IMR-90 (cell line): ENCODE measurements at regions of chr6 and their contacts with region 1.

Region 1: DNA sequence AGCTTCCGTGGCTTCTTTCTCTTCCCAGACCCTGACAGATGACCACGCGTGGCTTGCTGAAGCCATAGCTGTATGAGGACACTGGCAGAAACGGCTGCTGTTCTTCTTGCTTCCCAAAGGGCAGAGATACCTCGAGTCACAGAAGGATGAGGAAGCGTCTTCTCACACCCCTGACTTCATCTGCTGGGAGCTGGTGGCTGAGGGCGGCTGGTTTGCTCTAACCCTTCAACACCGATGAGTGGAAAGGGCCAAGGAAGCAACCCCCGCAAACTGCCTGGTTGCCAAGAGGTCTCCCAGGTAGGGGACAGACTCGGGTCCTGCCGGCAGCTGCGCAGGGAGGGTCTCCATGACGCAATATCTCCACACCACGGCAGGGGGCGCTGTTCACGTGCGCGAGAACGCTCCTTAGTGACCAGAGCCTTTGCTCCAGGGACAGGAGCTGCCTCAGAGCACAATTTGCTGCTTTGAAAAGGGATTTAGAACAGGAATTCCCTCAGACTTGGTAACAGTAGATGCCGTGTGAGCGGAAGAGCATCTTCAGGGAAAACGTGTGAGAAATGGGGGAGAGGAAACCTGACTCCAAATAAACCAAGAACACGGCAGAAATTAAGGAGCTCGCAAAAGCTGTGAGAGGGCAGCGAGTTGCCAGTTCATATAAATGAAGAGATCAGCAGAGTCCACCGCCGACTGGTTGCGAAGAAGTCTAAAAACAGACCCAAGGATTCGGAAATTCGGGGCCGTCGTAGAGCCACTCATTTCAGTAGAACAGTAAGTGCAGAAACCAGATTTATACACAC is 80.2 kb downstream of the ERMARD start:
- DNase-seq: peak; percentile 36
- ATAC-seq: peak; percentile 97
- H3K4me3 ChIP-seq: no peak overlapping the region
- H3K27ac ChIP-seq: no peak overlapping the region
- H3K4me1 ChIP-seq: no peaks in the 10 kb centered on the region
- H3K27me3 ChIP-seq: peaks cover 4% of the 10 kb centered on the region
- CTCF ChIP-seq: peak; percentile 73
- POLR2A ChIP-seq: no peak
- RAD21 ChIP-seq: peak; percentile 80

Region 2: DNA sequence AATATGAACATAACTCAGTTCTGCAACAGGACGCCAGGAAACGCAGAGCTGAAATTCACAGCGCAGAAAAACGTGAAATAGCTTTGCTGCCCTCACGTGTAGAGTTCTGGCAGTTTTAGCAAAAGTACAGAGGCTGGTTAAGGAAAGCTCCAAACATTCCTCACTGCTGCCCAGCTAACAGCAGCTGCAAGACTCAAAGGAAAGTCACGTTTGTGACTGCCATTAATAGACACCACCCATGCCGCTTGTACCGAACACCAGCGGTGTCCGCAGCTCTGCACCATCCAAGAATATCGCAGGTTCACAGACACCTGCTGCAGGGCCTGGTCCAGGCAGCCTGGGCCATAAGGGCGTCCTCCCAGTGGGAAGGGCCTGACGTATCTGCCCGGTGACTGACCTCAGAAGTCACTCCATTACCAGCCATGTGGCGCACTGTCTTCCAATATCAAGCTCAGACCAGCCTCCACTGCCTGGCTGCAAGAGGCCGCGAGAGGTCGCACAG is 191.2 kb before region 1 on chr6:
- CTCF ChIA-PET with region 1: no interaction called
- POLR2A ChIA-PET with region 1: no interaction called
- dilution Hi-C with region 1: no loop called
- in situ Hi-C with region 1: no loop called
- intact Hi-C with region 1: no loop called
- DNase-seq: peak; percentile 17
- ATAC-seq: no peak
- H3K4me3 ChIP-seq: no peak overlapping the region
- H3K27ac ChIP-seq: no peak overlapping the region
- H3K4me1 ChIP-seq: no peaks in the 10 kb centered on the region
- H3K27me3 ChIP-seq: no peaks in the 10 kb centered on the region
- CTCF ChIP-seq: peak; percentile 27
- POLR2A ChIP-seq: no peak
- RAD21 ChIP-seq: peak; percentile 42

Region 3: DNA sequence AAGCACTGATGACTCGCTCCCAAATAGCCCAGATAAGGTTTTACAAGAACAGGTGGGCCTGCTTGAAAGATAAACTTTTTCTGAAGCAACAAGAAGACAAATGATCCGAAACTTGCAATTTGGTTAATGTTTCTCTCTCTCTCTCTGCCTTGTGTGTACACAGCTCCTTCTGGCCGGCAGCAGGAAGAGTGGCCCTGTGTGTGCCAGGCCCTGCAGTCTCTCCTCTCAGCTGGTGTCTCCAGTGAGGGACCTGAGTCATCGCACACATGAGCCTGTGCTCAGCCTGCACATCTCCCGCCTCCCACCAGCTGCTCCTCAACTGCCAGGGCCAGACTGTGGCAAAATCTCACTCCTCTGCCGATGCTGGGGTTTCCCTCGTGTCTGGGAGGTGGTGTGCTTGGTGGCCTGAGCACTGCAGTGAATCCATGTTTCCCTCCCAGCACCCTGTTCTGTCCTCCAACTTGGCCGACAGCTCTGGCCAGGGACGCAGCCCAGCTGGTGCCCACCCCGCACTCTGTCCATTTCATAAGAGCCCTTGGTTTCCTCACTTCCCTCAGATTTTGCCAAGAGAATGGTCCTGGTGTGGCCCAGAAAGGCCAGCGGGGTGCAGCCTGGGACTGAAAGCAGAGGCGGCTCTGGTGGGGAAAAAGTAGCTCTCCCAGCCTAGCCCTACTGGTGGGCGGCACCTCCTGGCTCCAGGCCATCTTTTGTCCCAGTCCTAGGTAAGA is 30.8 kb before region 1 on chr6:
- CTCF ChIA-PET with region 1: interaction called, 13 read pairs
- POLR2A ChIA-PET with region 1: no interaction called
- dilution Hi-C with region 1: no loop called
- in situ Hi-C with region 1: no loop called
- intact Hi-C with region 1: no loop called
- DNase-seq: peak; percentile 82
- ATAC-seq: peak; percentile 91
- H3K4me3 ChIP-seq: no peak overlapping the region
- H3K27ac ChIP-seq: peak overlapping the region; percentile 4; the same call in 1 of the 2 replicates
- H3K4me1 ChIP-seq: peaks cover 10% of the 10 kb centered on the region; the same call in 1 of the 2 replicates
- H3K27me3 ChIP-seq: peaks cover 18% of the 10 kb centered on the region
- CTCF ChIP-seq: no peak
- POLR2A ChIP-seq: no peak
- RAD21 ChIP-seq: no peak

Region 4: GRCh38 chr6:169890049-169890448 is 58.4 kb after region 1 on chr6:
- CTCF ChIA-PET with region 1: no interaction called
- POLR2A ChIA-PET with region 1: no interaction called
- dilution Hi-C with region 1: no loop called
- in situ Hi-C with region 1: no loop called
- intact Hi-C with region 1: no loop called
- DNase-seq: no peak
- ATAC-seq: no peak
- H3K4me3 ChIP-seq: no peak overlapping the region
- H3K27ac ChIP-seq: no peak overlapping the region
- H3K4me1 ChIP-seq: no peaks in the 10 kb centered on the region
- H3K27me3 ChIP-seq: no peaks in the 10 kb centered on the region
- CTCF ChIP-seq: no peak
- POLR2A ChIP-seq: no peak
- RAD21 ChIP-seq: no peak

Region 5: DNA sequence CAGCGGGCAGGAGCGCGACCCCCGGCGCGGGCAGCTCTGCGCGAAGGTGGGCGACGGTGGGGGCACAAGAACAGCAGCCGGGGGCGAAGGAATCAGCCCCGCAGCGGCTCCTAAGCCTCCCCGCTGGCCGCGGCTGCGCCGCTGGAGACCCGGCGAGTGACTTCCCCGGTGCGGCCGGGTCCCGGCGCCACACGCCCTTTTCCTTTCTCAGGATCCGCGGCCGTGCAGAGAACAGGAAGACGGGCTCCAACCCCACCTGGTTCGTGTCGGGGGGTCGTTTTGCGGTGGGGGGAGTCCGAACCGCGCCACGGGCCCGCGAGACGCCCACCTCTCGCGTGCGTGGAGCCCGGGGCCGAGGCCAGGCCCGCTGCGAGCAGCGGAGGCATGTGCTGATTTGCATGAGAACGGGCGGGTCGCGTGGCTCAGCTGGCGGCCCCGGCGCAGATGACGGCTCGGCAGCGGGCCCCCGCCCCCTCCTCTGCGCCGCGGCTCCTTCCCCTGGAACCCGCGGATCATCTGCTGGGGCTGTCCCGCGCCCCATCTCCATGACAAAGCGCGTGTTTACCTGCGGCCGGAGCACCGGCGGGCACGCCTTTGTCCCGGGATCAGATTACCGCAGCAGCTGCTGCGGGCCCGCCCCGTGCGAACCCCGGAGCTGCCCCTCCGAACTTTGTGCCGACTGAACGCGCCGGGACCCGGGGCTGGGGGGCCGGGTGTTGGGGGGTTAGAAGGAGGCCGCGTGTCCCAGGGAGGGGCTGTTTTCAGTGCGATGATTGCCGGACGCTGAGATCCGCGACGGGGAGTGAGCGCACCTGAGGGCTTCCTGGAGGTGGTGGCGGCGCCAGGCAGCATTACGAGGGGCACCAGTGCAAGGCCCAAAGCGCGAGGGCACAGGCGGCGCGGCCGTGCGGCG is 464.1 kb after region 1 on chr6:
- CTCF ChIA-PET with region 1: interaction called, 9 read pairs
- POLR2A ChIA-PET with region 1: no interaction called
- dilution Hi-C with region 1: no loop called
- in situ Hi-C with region 1: no loop called
- intact Hi-C with region 1: loop called (anchors 10 kb)
- DNase-seq: no peak
- ATAC-seq: peak; percentile 33
- H3K4me3 ChIP-seq: peak overlapping the region; percentile 49
- H3K27ac ChIP-seq: no peak overlapping the region
- H3K4me1 ChIP-seq: peaks cover 4% of the 10 kb centered on the region; the same call in 1 of the 2 replicates
- H3K27me3 ChIP-seq: peaks cover 78% of the 10 kb centered on the region
- CTCF ChIP-seq: no peak
- POLR2A ChIP-seq: no peak
- RAD21 ChIP-seq: no peak

Region 6: DNA sequence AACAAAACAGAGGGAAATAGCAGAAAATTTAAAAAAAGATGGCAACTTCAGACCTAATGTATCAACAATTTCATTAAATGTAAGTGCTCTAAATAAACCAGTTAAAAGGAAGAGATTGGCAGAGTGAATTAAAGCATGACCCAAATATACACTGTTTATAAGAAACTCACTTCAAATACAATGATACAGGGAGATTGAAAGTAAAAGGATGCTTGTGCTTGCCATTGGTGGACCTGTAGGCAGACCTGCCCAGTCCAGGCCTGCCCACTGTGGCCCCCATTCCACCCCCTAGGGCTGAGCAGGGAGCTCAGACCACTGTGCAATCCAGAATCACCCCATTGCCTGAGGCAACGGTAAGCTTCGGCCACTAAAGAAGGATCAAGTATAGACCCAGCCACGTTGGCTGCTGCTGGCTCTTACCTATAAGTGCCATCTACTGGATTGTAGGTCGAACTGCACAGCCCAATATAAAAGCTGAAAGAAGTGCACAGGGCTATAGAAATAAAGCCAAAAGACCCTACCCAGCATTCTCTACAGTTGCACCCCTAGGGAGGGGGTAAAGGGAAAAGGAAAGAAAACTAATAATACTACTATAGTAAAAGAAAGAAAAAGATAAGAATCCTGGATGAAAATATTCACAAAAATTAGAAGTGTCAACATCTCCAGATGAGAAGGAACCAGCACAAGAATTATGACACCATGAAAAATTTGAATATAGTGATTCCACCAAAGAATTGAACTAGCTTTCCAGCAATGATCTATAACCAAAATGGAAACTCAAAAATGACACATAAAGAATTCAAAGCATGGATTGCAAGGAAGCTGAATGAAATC is 685.4 kb after region 1 on chr6:
- CTCF ChIA-PET with region 1: interaction called, 18 read pairs
- POLR2A ChIA-PET with region 1: no interaction called
- dilution Hi-C with region 1: no loop called
- in situ Hi-C with region 1: loop called (anchors 5 kb)
- intact Hi-C with region 1: loop called (anchors 1 kb)
- DNase-seq: peak; percentile 78
- ATAC-seq: peak; percentile 100
- H3K4me3 ChIP-seq: no peak overlapping the region
- H3K27ac ChIP-seq: no peak overlapping the region
- H3K4me1 ChIP-seq: no peaks in the 10 kb centered on the region
- H3K27me3 ChIP-seq: peaks cover 3% of the 10 kb centered on the region
- CTCF ChIP-seq: peak; percentile 79
- POLR2A ChIP-seq: no peak
- RAD21 ChIP-seq: peak; percentile 94

Region 7: DNA sequence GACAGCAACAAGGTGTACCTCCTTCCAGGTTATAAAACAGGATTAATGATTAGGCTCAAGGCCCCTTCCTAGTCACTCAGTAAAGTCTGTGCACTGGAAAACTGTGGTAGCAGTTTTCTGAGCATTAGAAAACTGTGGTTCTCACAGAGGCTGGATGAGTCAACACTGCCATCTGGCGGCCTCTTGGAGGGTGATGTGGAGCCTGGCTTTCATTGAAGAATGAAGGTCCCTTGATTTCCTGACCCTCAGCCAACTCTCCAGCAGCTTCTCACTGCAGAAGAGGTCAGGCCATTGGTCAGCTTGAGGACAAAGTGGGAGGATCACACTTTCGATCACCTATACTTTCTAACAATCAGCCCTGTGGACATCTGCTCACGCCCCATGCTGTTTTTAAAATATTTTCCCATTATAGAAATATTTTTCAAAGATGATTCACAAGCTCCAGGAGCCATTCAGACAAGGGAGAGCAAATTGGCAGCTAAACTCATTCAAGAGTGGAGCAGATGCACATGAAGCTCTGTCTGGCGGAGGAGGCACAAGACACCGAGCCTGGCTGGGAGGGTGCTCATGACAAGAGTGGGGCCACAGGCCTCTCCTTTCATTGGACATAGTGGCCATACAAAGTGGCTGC is 698.3 kb after region 1 on chr6:
- CTCF ChIA-PET with region 1: interaction called, 21 read pairs
- POLR2A ChIA-PET with region 1: no interaction called
- dilution Hi-C with region 1: no loop called
- in situ Hi-C with region 1: no loop called
- intact Hi-C with region 1: loop called (anchors 1 kb)
- DNase-seq: peak; percentile 69
- ATAC-seq: peak; percentile 88
- H3K4me3 ChIP-seq: no peak overlapping the region
- H3K27ac ChIP-seq: no peak overlapping the region
- H3K4me1 ChIP-seq: peaks cover 6% of the 10 kb centered on the region
- H3K27me3 ChIP-seq: no peaks in the 10 kb centered on the region
- CTCF ChIP-seq: peak; percentile 92
- POLR2A ChIP-seq: no peak
- RAD21 ChIP-seq: peak; percentile 95